MCF 10A (cell line): ENCODE measurements at regions of chr1 and their contacts with region 1.

Region 1: GRCh38 chr1:226121587-226122400 is 59.3 kb downstream of the H3-3A start:
- DNase-seq: peak; percentile 72
- H3K4me3 Mint-ChIP-seq: peak overlapping the region; percentile 65
- H3K27ac Mint-ChIP-seq: no peak overlapping the region
- H3K4me1 Mint-ChIP-seq: peaks cover 29% of the 10 kb centered on the region
- H3K27me3 Mint-ChIP-seq: no peaks in the 10 kb centered on the region
- CTCF ChIP-seq: peak; percentile 99

Region 2: GRCh38 chr1:225642177-225642576 is 479.6 kb before region 1 on chr1:
- CTCF ChIA-PET with region 1: no interaction called
- POLR2A ChIA-PET with region 1: no interaction called
- intact Hi-C with region 1: no loop called
- DNase-seq: no peak
- H3K4me3 Mint-ChIP-seq: no peak overlapping the region
- H3K27ac Mint-ChIP-seq: no peak overlapping the region
- H3K4me1 Mint-ChIP-seq: peaks cover 17% of the 10 kb centered on the region
- H3K27me3 Mint-ChIP-seq: no peaks in the 10 kb centered on the region
- CTCF ChIP-seq: no peak

Region 3: GRCh38 chr1:225950905-225951497 is 170.8 kb before region 1 on chr1:
- CTCF ChIA-PET with region 1: no interaction called
- POLR2A ChIA-PET with region 1: no interaction called
- intact Hi-C with region 1: no loop called
- DNase-seq: no peak
- H3K4me3 Mint-ChIP-seq: no peak overlapping the region
- H3K27ac Mint-ChIP-seq: no peak overlapping the region
- H3K4me1 Mint-ChIP-seq: peaks cover 5% of the 10 kb centered on the region
- H3K27me3 Mint-ChIP-seq: peaks cover 53% of the 10 kb centered on the region
- CTCF ChIP-seq: no peak

Region 4: GRCh38 chr1:225977937-225978748 is 143.7 kb before region 1 on chr1:
- CTCF ChIA-PET with region 1: interaction called, 5 read pairs
- POLR2A ChIA-PET with region 1: no interaction called
- intact Hi-C with region 1: loop called (anchors 5 kb)
- DNase-seq: no peak
- H3K4me3 Mint-ChIP-seq: no peak overlapping the region
- H3K27ac Mint-ChIP-seq: no peak overlapping the region
- H3K4me1 Mint-ChIP-seq: peaks cover 5% of the 10 kb centered on the region
- H3K27me3 Mint-ChIP-seq: no peaks in the 10 kb centered on the region
- CTCF ChIP-seq: no peak

Region 5: DNA sequence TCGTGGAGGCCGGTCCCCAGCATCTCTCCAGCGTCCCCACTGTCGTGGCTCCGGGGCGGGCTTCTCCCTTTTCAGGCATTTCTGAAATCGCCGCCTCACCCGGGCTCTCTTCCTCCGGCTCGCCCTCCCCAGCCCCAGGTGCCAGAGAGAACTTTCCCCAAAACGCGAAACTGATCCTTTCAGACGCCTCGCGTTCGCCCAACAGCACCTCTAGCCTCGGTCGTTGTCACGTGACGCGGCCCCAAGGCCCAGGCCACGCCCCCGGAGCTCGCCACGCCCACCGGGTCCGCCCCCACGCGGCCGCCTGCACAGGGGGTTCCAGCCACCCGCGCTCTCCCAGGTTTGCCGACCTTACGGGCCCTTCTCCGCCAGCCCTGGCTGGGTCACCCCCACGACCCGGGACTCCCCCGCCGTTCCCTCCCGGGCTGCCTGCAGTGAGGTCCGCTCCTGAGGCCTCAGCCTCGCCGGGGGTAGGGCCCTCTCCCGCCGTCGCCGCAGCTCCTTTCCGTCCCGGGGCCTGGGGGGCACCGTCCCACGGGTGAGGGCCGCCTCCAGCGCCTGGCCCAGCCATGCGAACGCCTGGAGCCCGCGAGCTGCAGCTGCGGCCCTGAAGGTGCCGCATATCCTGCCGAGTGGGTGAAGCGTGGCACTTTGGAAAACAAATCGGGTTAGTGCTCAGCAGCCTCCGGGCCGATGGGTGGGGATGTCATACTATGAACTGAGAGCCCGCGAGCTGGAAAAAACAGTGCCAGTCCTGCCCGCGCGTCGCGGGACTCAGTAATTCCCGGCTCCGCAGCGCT is 38.3 kb before region 1 on chr1:
- CTCF ChIA-PET with region 1: interaction called, 36 read pairs
- POLR2A ChIA-PET with region 1: interaction called, 28 read pairs
- intact Hi-C with region 1: loop called (anchors 5 kb)
- DNase-seq: peak; percentile 97
- H3K4me3 Mint-ChIP-seq: peak overlapping the region; percentile 83
- H3K27ac Mint-ChIP-seq: peak overlapping the region; percentile 24
- H3K4me1 Mint-ChIP-seq: peaks cover 6% of the 10 kb centered on the region
- H3K27me3 Mint-ChIP-seq: no peaks in the 10 kb centered on the region
- CTCF ChIP-seq: no peak

Region 6: GRCh38 chr1:226157761-226158316 is 36.0 kb after region 1 on chr1:
- CTCF ChIA-PET with region 1: interaction called, 42 read pairs
- POLR2A ChIA-PET with region 1: no interaction called
- intact Hi-C with region 1: no loop called
- DNase-seq: no peak
- H3K4me3 Mint-ChIP-seq: no peak overlapping the region
- H3K27ac Mint-ChIP-seq: no peak overlapping the region
- H3K4me1 Mint-ChIP-seq: no peaks in the 10 kb centered on the region
- H3K27me3 Mint-ChIP-seq: no peaks in the 10 kb centered on the region
- CTCF ChIP-seq: no peak

Region 7: DNA sequence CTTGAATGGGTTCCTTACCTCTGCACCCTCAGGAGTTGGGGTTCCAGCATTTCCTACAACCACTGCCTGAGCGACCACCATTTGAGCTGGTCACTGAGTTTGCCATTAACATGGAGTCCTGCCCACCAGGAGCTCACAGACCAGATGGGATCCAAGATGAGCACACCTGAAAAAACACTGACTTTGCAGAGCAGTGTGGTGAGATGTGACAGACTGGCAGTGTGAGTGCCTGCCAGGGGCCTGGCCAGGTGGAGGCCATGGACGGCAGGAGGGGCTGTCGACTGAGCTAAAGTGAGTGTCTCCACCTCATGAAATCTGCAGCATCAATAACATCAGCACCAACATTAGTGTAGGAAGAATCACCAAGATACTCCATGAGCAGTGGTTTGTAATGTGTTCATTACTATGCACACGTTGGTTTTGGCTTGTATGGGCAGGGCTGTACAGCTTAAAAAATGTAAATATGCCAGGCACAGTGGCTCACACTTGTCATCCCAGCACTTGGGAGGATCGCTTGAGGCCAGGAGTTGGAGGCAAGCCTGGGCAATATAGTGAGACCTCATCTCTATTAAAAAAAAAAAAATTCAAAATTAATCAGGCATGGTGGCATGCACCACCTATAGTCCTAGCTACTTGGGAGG is 89.5 kb after region 1 on chr1:
- CTCF ChIA-PET with region 1: interaction called, 14 read pairs
- POLR2A ChIA-PET with region 1: no interaction called
- intact Hi-C with region 1: no loop called
- DNase-seq: no peak
- H3K4me3 Mint-ChIP-seq: no peak overlapping the region
- H3K27ac Mint-ChIP-seq: no peak overlapping the region
- H3K4me1 Mint-ChIP-seq: no peaks in the 10 kb centered on the region
- H3K27me3 Mint-ChIP-seq: no peaks in the 10 kb centered on the region
- CTCF ChIP-seq: no peak

Region 8: DNA sequence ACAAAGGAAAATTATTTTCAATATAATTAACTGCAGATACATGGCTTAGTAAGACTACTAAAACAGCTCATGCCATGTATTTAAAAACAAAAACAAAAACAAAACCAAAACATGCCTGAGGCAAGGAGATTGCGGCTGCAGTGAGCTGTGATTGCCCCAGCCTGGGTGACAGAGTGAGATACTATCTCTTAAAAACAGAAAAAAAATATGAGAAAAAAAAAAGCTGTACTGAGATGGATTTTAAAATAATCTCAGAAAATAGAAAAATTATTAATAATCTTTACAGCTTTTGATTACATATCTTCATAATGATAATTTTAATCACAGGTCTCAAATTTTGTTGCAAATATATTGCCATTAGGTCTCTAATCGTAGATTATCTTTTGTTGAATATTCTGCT is 211.2 kb after region 1 on chr1:
- CTCF ChIA-PET with region 1: interaction called, 118 read pairs
- POLR2A ChIA-PET with region 1: interaction called, 19 read pairs
- intact Hi-C with region 1: loop called (anchors 1 kb)
- DNase-seq: no peak
- H3K4me3 Mint-ChIP-seq: peak overlapping the region; percentile 9
- H3K27ac Mint-ChIP-seq: no peak overlapping the region
- H3K4me1 Mint-ChIP-seq: peaks cover 6% of the 10 kb centered on the region
- H3K27me3 Mint-ChIP-seq: no peaks in the 10 kb centered on the region
- CTCF ChIP-seq: no peak